Breast epithelium (tissue), 4 donors: ENCODE measurements at regions of chrX and their contacts with region 1.

Region 1: DNA sequence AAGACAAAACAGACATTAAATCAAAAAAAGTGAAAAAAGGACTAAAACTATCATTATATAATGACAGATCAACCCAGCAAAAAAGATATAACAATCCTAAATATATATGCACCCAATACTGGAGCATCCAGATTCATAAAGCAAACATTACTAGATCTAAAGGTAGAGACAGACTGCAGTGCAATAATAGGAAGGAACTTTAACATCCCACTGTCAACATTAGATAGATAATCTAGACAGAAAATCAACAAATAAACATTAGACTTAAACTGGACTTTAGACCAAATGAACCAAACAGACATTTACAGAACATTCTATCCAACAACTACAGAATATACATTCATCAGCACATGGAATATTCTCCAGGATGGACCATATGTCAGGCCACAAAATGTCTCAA is 29.5 kb upstream of the RAB39B start:
- DNase-seq: no peak
- H3K4me3 ChIP-seq: no peak overlapping the region
- H3K27ac ChIP-seq: no peak overlapping the region
- H3K4me1 ChIP-seq: no peaks in the 10 kb centered on the region
- H3K27me3 ChIP-seq: no peaks in the 10 kb centered on the region
- CTCF ChIP-seq: no peak
- POLR2A ChIP-seq: no peak

Region 2: GRCh38 chrX:155246748-155247147 is 47.0 kb before region 1 on chrX:
- intact Hi-C with region 1: loop called (anchors 2 kb)
- DNase-seq: no peak
- H3K4me3 ChIP-seq: no peak overlapping the region
- H3K27ac ChIP-seq: no peak overlapping the region
- H3K4me1 ChIP-seq: no peaks in the 10 kb centered on the region
- H3K27me3 ChIP-seq: no peaks in the 10 kb centered on the region
- CTCF ChIP-seq: no peak
- POLR2A ChIP-seq: no peak